A673 (cell line): ENCODE measurements at regions of chr2 and their contacts with region 1.

Region 1: GRCh38 chr2:67008155-67008554 is 389.0 kb upstream of the ETAA1 start:
- DNase-seq: no peak
- H3K4me3 ChIP-seq: no peak overlapping the region
- H3K27ac ChIP-seq: no peak overlapping the region
- H3K4me1 ChIP-seq: peaks cover 17% of the 10 kb centered on the region
- H3K27me3 ChIP-seq: no peaks in the 10 kb centered on the region
- CTCF ChIP-seq: no peak

Region 2: GRCh38 chr2:65813631-65814173 is 1194.5 kb before region 1 on chr2:
- CTCF ChIA-PET with region 1: no interaction called
- POLR2A ChIA-PET with region 1: no interaction called
- intact Hi-C with region 1: no loop called
- DNase-seq: peak; percentile 74
- H3K4me3 ChIP-seq: no peak overlapping the region
- H3K27ac ChIP-seq: peak overlapping the region; percentile 53
- H3K4me1 ChIP-seq: peaks cover 20% of the 10 kb centered on the region
- H3K27me3 ChIP-seq: no peaks in the 10 kb centered on the region
- CTCF ChIP-seq: no peak

Region 3: DNA sequence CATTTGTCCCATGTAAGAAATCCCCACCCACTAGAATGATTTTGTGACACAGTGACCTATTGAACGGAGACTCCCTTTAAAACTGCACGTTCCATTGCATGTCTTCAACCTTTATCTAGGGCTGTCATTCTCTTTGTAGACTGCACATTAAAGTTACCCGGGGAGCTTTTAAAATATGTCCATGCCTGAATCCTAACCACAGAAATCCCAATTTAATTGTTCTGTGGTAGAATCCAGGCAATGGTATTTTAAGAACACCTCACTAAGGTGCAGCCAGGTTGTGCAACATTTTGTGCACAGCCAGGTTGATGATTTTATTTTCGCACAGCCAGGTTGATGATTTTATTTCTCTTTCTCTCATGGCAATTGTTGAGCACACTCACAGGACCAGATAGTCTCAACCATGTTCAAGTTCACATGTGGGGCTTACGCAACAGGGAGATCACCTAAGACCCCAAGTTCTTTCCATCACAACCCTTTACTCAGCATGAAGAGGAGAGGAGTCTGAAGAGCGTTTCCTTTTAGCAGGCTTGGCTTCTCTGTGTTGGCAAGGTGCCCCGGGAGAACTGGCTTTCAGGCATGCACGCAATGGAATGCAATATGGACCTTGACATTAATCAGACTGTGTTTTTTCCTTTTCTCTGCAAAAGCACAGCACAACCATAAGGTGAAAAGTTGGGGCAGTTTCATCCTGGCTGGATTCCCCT is 78.4 kb before region 1 on chr2:
- CTCF ChIA-PET with region 1: no interaction called
- POLR2A ChIA-PET with region 1: no interaction called
- intact Hi-C with region 1: no loop called
- DNase-seq: peak; percentile 61
- H3K4me3 ChIP-seq: no peak overlapping the region
- H3K27ac ChIP-seq: no peak overlapping the region
- H3K4me1 ChIP-seq: peaks cover 10% of the 10 kb centered on the region
- H3K27me3 ChIP-seq: no peaks in the 10 kb centered on the region
- CTCF ChIP-seq: no peak

Region 4: DNA sequence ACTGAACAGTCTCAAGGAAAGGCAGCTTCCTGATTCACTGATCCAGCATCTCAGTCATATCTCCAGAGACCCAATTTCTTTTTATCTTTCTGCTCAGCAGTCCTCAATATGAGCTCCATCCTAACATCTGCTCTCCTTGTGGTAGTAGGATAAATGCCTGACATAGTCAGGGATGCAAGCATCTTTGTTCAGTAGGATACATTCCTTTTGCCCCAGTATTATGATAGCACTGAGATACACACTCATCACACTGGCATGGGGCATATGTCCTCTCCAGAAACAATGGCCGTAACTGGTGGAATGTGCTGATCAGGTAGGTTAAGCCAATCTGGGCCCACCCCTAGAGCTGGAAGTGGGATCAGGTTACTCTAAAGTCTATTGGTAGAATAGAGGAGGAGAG is 596.2 kb after region 1 on chr2:
- CTCF ChIA-PET with region 1: no interaction called
- POLR2A ChIA-PET with region 1: no interaction called
- intact Hi-C with region 1: no loop called
- DNase-seq: no peak
- H3K4me3 ChIP-seq: no peak overlapping the region
- H3K27ac ChIP-seq: no peak overlapping the region
- H3K4me1 ChIP-seq: no peaks in the 10 kb centered on the region
- H3K27me3 ChIP-seq: no peaks in the 10 kb centered on the region
- CTCF ChIP-seq: no peak

Region 5: GRCh38 chr2:68689553-68690537 is 1681.7 kb after region 1 on chr2:
- CTCF ChIA-PET with region 1: no interaction called
- POLR2A ChIA-PET with region 1: interaction called, 10 read pairs
- intact Hi-C with region 1: no loop called
- DNase-seq: peak; percentile 90
- H3K4me3 ChIP-seq: no peak overlapping the region
- H3K27ac ChIP-seq: peak overlapping the region; percentile 54
- H3K4me1 ChIP-seq: peaks cover 47% of the 10 kb centered on the region
- H3K27me3 ChIP-seq: no peaks in the 10 kb centered on the region
- CTCF ChIP-seq: no peak